Calu3 (cell line): ENCODE measurements at regions of chr6 and their contacts with region 1.

Region 1: GRCh38 chr6:166540631-166541331 is 45.7 kb downstream of the RAMACL start:
- DNase-seq: peak; percentile 43
- H3K4me3 Mint-ChIP-seq: peak overlapping the region; percentile 69
- H3K27ac Mint-ChIP-seq: peak overlapping the region; percentile 31
- H3K4me1 Mint-ChIP-seq: peaks cover 30% of the 10 kb centered on the region
- H3K27me3 Mint-ChIP-seq: no peaks in the 10 kb centered on the region
- CTCF ChIP-seq: no peak

Region 2: GRCh38 chr6:166678426-166678825 is 137.6 kb after region 1 on chr6:
- CTCF ChIA-PET with region 1: no interaction called
- intact Hi-C with region 1: loop called (anchors 1 kb)
- DNase-seq: peak; percentile 73
- H3K4me3 Mint-ChIP-seq: peak overlapping the region; percentile 57
- H3K27ac Mint-ChIP-seq: peak overlapping the region; percentile 98
- H3K4me1 Mint-ChIP-seq: peaks cover 38% of the 10 kb centered on the region
- H3K27me3 Mint-ChIP-seq: no peaks in the 10 kb centered on the region
- CTCF ChIP-seq: no peak